ENCODE measurements at regions of chr4 and their contacts with region 1.

Region 1: GRCh38 chr4:2241410-2242353 is at the starts of genes HAUS3 and POLN:
- DNase-seq: peak; percentile 98 to 100 (median 99)
- ATAC-seq: peak; percentile 90
- H3K4me3 ChIP-seq: peak within 1 kb of the TSS; percentile 89 to 93
- H3K4me3 Mint-ChIP-seq: peak within 1 kb of the TSS; percentile 82
- H3K27ac ChIP-seq: peak within 1 kb of the TSS; percentile 86 to 88
- H3K27ac Mint-ChIP-seq: peak within 1 kb of the TSS; percentile 85
- H3K4me1 ChIP-seq: peaks cover 40% of the 10 kb centered on the region
- H3K4me1 Mint-ChIP-seq: peaks cover 56% of the 10 kb centered on the region
- H3K27me3 ChIP-seq: no peaks in the 10 kb centered on the region
- H3K27me3 Mint-ChIP-seq: no peaks in the 10 kb centered on the region
- CTCF ChIP-seq: no peak
- total RNA-seq, gene HAUS3: 154 TPM
- total RNA-seq, gene POLN: 0.89 to 1.7 TPM

Region 2: GRCh38 chr4:2008875-2009703 is 232.6 kb before region 1 on chr4 and contains the start of gene NELFA:
- CTCF ChIA-PET with region 1: no interaction called
- POLR2A ChIA-PET with region 1: no interaction called
- intact Hi-C with region 1: loop called in 1 of 2 experiments (anchors 1 kb)
- DNase-seq: peak; percentile 86 to 98 (median 96)
- ATAC-seq: peak; percentile 83
- H3K4me3 ChIP-seq: peak within 1 kb of the TSS; percentile 96 to 100
- H3K4me3 Mint-ChIP-seq: peak within 1 kb of the TSS; percentile 92
- H3K27ac ChIP-seq: peak within 1 kb of the TSS; percentile 98 to 99
- H3K27ac Mint-ChIP-seq: peak within 1 kb of the TSS; percentile 96
- H3K4me1 ChIP-seq: peaks cover 18% of the 10 kb centered on the region
- H3K4me1 Mint-ChIP-seq: peaks cover 32% of the 10 kb centered on the region
- H3K27me3 ChIP-seq: no peaks in the 10 kb centered on the region
- H3K27me3 Mint-ChIP-seq: no peaks in the 10 kb centered on the region
- CTCF ChIP-seq: no peak
- total RNA-seq, gene NELFA: 39.0 to 45.8 TPM

Region 3: DNA sequence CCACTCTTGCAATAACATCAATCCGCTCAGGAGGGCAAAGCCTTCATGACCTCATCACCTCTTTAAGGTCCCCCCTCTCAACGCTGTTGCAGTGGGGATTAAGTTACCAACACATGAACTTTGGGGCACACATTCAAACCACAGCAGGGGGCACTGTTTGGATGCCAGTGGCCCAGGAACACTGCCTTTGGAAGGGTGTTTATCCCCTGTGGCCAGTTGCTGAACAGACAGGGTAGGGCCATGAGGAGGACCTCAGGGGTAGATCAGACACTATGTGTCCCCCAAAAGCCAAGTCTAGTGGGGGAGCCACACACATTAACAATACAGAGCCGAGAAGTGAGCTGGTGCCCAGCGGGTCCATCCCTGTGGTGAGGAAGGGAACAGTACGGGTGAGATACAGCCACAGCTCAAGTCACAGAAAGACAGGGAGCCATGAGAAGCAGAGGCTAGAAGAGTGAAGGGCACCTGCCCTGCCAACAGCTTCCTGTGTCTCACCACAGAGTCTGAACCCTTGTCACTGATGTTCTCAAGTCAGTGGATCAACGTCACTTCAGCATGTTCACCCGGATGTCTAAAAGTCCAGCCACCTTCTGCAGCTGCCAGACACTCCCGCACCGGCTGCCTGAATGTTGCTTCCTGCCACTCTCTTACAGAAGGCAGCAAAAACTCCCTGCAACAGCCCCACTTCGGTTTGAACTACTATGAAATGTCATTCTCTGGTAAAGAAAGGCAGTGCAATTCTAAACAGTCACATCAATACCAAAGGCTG is 40.1 kb after region 1 on chr4:
- CTCF ChIA-PET with region 1: no interaction called
- POLR2A ChIA-PET with region 1: no interaction called
- intact Hi-C with region 1: loop called (anchors 1 kb)
- DNase-seq: peak; percentile 73 to 98 (median 85)
- ATAC-seq: peak; percentile 83
- H3K4me3 ChIP-seq: peak overlapping the region in 1 of 2 experiments; percentile 30
- H3K4me3 Mint-ChIP-seq: peak overlapping the region; percentile 78
- H3K27ac ChIP-seq: peak overlapping the region; percentile 67 to 94
- H3K27ac Mint-ChIP-seq: peak overlapping the region; percentile 99
- H3K4me1 ChIP-seq: peaks cover 46% of the 10 kb centered on the region
- H3K4me1 Mint-ChIP-seq: peaks cover 41% of the 10 kb centered on the region
- H3K27me3 ChIP-seq: no peaks in the 10 kb centered on the region
- H3K27me3 Mint-ChIP-seq: no peaks in the 10 kb centered on the region
- CTCF ChIP-seq: peak; percentile 72

Region 4: DNA sequence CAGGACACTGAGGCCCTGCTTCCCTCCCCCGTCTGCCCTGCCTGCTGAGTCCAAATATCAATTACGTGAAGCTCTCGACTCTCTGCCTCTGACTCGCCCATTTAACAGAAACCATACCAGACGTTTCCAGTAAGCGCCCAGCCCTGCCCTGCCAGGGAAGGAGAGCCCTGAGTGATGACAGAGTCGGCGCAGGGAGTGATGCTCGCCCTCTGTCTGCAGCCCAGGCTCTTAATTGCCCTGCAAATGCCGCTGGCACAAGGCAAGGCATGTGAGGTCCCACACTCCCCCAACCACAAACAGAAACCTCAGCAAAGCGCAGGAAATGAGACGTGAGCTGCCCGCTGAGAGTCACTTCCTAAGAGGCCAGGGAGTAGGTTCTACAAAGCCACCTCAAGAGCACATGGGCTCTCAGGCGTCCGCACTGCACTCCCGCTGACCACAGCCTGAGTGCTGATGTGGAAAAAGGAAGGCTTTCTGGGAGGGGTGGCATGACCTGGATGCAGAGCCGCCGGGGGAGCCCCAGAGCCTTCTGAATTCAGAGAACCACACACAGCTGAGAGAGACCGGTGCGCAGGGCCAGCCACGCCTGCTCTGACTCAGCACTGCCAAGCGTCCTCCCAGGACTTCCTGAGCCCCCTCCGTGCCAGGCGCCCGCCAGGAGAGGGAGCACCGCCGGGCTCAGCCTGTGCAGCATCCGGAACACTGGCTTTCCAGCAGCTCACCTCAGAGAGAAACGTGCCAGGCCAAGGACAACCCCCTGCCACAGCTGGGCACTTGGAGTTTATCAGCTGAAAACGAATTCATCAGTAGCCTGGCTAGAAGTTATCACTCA is 171.4 kb after region 1 on chr4:
- CTCF ChIA-PET with region 1: interaction called, 9 read pairs
- POLR2A ChIA-PET with region 1: interaction called, 7 read pairs
- intact Hi-C with region 1: loop called (anchors 1 kb)
- DNase-seq: peak; percentile 71 to 98 (median 86)
- ATAC-seq: peak; percentile 77
- H3K4me3 ChIP-seq: peak overlapping the region; percentile 25 to 38
- H3K4me3 Mint-ChIP-seq: peak overlapping the region; percentile 73
- H3K27ac ChIP-seq: peak overlapping the region; percentile 87 to 91
- H3K27ac Mint-ChIP-seq: peak overlapping the region; percentile 97
- H3K4me1 ChIP-seq: peaks cover 62% of the 10 kb centered on the region
- H3K4me1 Mint-ChIP-seq: peaks cover 68% of the 10 kb centered on the region
- H3K27me3 ChIP-seq: peaks cover 4 to 7% of the 10 kb centered on the region in 2 experiments
- H3K27me3 Mint-ChIP-seq: peaks cover 4% of the 10 kb centered on the region
- CTCF ChIP-seq: peak; percentile 31

Region 5: GRCh38 chr4:2468445-2469192 is 226.9 kb after region 1 on chr4 and contains the start of gene RNF4:
- CTCF ChIA-PET with region 1: no interaction called
- POLR2A ChIA-PET with region 1: interaction called, 7 read pairs
- intact Hi-C with region 1: loop called (anchors 1 kb)
- DNase-seq: peak; percentile 90 to 98 (median 94)
- ATAC-seq: peak; percentile 82
- H3K4me3 ChIP-seq: peak within 1 kb of the TSS; percentile 54 to 91
- H3K4me3 Mint-ChIP-seq: peak within 1 kb of the TSS; percentile 96
- H3K27ac ChIP-seq: peak within 1 kb of the TSS; percentile 95 to 97
- H3K27ac Mint-ChIP-seq: peak within 1 kb of the TSS; percentile 98
- H3K4me1 ChIP-seq: peaks cover 42% of the 10 kb centered on the region
- H3K4me1 Mint-ChIP-seq: peaks cover 45% of the 10 kb centered on the region
- H3K27me3 ChIP-seq: no peaks in the 10 kb centered on the region
- H3K27me3 Mint-ChIP-seq: no peaks in the 10 kb centered on the region
- CTCF ChIP-seq: no peak
- total RNA-seq, gene RNF4: 130 to 134 TPM

Region 6: DNA sequence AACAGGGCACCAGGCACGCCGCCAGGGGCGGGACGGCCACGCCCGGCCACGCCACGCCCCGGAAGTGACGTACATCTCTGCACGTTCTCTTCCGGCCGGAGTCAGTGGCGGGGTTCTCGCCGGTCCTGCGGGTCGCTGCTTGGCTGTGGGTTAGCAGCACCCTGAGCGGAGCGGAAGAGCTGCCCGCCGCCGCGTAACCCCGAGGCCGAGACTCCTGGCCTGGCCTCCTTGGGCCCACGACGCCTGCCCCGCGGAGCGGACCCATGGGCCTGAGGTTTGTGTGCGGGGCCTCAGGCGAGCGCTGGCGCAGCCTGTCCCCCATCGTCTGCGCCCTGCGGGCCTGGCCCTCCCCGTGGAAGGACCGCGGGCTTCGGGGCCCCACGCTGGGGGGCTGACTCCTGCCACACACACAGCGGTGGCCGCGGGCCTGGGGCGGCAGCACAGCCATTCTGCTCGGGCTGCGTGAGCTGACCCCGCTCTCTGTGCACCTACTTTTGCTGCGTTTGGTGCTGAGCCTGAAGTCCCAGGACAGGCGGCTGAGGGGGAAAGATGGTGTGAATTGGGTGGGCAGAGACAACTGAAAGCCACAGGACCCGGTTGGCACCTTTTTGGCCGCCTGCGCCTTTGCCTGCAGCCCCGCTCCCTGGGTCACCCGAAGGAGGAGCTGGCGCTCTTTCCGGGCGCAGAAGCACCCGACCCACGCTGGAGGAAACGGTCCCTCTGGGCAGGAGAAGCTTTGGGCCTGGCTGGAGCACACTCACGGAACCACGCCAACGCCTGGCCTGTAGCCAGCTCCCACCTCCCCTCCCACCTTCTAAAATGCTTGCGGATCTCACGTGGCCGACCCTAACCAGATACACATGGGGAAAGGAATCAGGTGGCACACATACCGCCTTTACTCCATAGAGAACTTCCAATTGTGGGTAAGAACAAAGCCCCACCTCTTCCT is 693.4 kb after region 1 on chr4:
- CTCF ChIA-PET with region 1: no interaction called
- POLR2A ChIA-PET with region 1: no interaction called
- intact Hi-C with region 1: loop called (anchors 10 kb)
- DNase-seq: peak; percentile 91 to 99 (median 97)
- ATAC-seq: peak; percentile 55
- H3K4me3 ChIP-seq: peak overlapping the region; percentile 71 to 95
- H3K4me3 Mint-ChIP-seq: peak overlapping the region; percentile 85
- H3K27ac ChIP-seq: peak overlapping the region; percentile 94 to 96
- H3K27ac Mint-ChIP-seq: peak overlapping the region; percentile 90
- H3K4me1 ChIP-seq: peaks cover 55% of the 10 kb centered on the region
- H3K4me1 Mint-ChIP-seq: peaks cover 46% of the 10 kb centered on the region
- H3K27me3 ChIP-seq: no peaks in the 10 kb centered on the region
- H3K27me3 Mint-ChIP-seq: no peaks in the 10 kb centered on the region
- CTCF ChIP-seq: no peak

Measured in CD8-positive, alpha-beta T cell (primary cell).